ENCODE measurements at regions of chrX and their contacts with region 1.

Region 1: GRCh38 chrX:134186362-134187121 is 50.4 kb upstream of the CCDC160 start:
- DNase-seq: peak; percentile 78
- H3K4me3 Mint-ChIP-seq: peak overlapping the region; percentile 42
- H3K27ac Mint-ChIP-seq: peak overlapping the region; percentile 21
- H3K4me1 Mint-ChIP-seq: peaks cover 13% of the 10 kb centered on the region
- H3K27me3 Mint-ChIP-seq: peaks cover 2% of the 10 kb centered on the region

Region 2: DNA sequence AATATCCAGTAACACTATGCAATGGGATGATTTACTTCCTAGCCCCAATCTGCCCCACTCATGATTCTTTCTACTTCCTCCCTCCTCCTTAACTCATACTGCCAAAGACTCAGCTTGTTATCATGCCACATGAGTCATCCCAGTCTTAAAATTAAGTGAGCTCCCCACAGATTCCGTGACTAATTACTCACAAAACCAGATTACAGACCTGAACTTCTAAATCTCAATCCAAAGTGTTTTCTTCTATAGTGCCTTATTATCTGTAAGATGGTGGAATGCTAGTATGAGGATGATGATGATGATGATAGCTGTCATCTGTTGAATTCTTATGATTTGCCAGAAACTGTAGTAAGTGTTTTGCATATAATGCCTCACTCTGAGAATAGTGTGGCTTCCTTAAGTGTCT is 173.4 kb before region 1 on chrX:
- CTCF ChIA-PET with region 1: no interaction called
- POLR2A ChIA-PET with region 1: interaction called, 3 read pairs
- intact Hi-C with region 1: loop called (anchors 1 kb)
- DNase-seq: no peak
- H3K4me3 Mint-ChIP-seq: no peak overlapping the region
- H3K27ac Mint-ChIP-seq: no peak overlapping the region
- H3K4me1 Mint-ChIP-seq: peaks cover 7% of the 10 kb centered on the region
- H3K27me3 Mint-ChIP-seq: peaks cover 5% of the 10 kb centered on the region

Region 3: GRCh38 chrX:134158821-134159512 is 27.6 kb before region 1 on chrX:
- CTCF ChIA-PET with region 1: interaction called, 7 read pairs
- POLR2A ChIA-PET with region 1: interaction called, 3 read pairs
- intact Hi-C with region 1: loop called (anchors 1 kb)
- DNase-seq: peak; percentile 65
- H3K4me3 Mint-ChIP-seq: no peak overlapping the region
- H3K27ac Mint-ChIP-seq: peak overlapping the region; percentile 71
- H3K4me1 Mint-ChIP-seq: peaks cover 13% of the 10 kb centered on the region
- H3K27me3 Mint-ChIP-seq: peaks cover 2% of the 10 kb centered on the region

Region 4: GRCh38 chrX:134171661-134172587 is 14.6 kb before region 1 on chrX:
- CTCF ChIA-PET with region 1: interaction called, 5 read pairs
- POLR2A ChIA-PET with region 1: interaction called, 6 read pairs
- intact Hi-C with region 1: loop called (anchors 1 kb)
- DNase-seq: peak; percentile 57
- H3K4me3 Mint-ChIP-seq: peak overlapping the region; percentile 78
- H3K27ac Mint-ChIP-seq: no peak overlapping the region
- H3K4me1 Mint-ChIP-seq: peaks cover 15% of the 10 kb centered on the region
- H3K27me3 Mint-ChIP-seq: peaks cover 13% of the 10 kb centered on the region

Region 5: GRCh38 chrX:134210465-134210864 is 23.9 kb after region 1 on chrX:
- CTCF ChIA-PET with region 1: no interaction called
- POLR2A ChIA-PET with region 1: no interaction called
- intact Hi-C with region 1: no loop called
- DNase-seq: no peak
- H3K4me3 Mint-ChIP-seq: no peak overlapping the region
- H3K27ac Mint-ChIP-seq: no peak overlapping the region
- H3K4me1 Mint-ChIP-seq: no peaks in the 10 kb centered on the region
- H3K27me3 Mint-ChIP-seq: no peaks in the 10 kb centered on the region

Region 6: DNA sequence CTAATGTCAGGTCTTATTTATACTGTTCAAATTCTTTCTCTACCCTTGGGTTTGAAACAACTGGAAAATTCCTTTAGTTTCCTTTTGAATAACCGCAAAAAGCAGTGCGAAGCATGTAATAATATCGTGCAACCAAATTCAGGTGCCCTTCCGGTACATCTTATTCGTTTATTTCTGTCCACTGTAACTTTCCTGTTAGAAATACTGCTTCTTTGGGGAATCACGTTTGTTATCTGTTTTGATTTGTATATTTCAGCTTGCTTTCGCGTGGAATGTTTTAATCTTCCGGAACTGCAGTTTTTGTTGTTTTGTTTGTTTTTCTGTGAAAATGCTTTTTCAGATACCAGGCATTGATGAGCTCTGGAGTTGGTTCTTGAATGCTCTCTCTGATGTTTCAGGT is 187.8 kb after region 1 on chrX:
- CTCF ChIA-PET with region 1: no interaction called
- POLR2A ChIA-PET with region 1: no interaction called
- intact Hi-C with region 1: loop called (anchors 2 kb)
- DNase-seq: no peak
- H3K4me3 Mint-ChIP-seq: peak overlapping the region; percentile 92
- H3K27ac Mint-ChIP-seq: peak overlapping the region; percentile 94
- H3K4me1 Mint-ChIP-seq: peaks cover 17% of the 10 kb centered on the region
- H3K27me3 Mint-ChIP-seq: no peaks in the 10 kb centered on the region